ENCODE measurements at regions of chr20 and their contacts with region 1.

Region 1: GRCh38 chr20:41738604-41739206 is 120.5 kb upstream of the CHD6 start:
- DNase-seq: peak in 1 of 2 experiments; percentile 59
- H3K4me3 ChIP-seq: no peak overlapping the region
- H3K27ac ChIP-seq: no peak overlapping the region
- H3K4me1 ChIP-seq: no peaks in the 10 kb centered on the region
- H3K27me3 ChIP-seq: peaks cover 38% of the 10 kb centered on the region
- CTCF ChIP-seq: peak; percentile 89

Region 2: GRCh38 chr20:41748756-41749582 is 10.3 kb after region 1 on chr20:
- CTCF ChIA-PET with region 1: no interaction called
- POLR2A ChIA-PET with region 1: no interaction called
- intact Hi-C with region 1: no loop called
- DNase-seq: no peak
- H3K4me3 ChIP-seq: no peak overlapping the region
- H3K27ac ChIP-seq: no peak overlapping the region
- H3K4me1 ChIP-seq: no peaks in the 10 kb centered on the region
- H3K27me3 ChIP-seq: peaks cover 37% of the 10 kb centered on the region
- CTCF ChIP-seq: no peak

Region 3: GRCh38 chr20:41984031-41984430 is 245.3 kb after region 1 on chr20:
- CTCF ChIA-PET with region 1: no interaction called
- POLR2A ChIA-PET with region 1: no interaction called
- intact Hi-C with region 1: no loop called
- DNase-seq: no peak
- H3K4me3 ChIP-seq: no peak overlapping the region
- H3K27ac ChIP-seq: no peak overlapping the region
- H3K4me1 ChIP-seq: no peaks in the 10 kb centered on the region
- H3K27me3 ChIP-seq: 0 out of 2 replicates have a peak, but pooled peaks cover under 1% of the 10 kb centered on the region
- CTCF ChIP-seq: no peak

Region 4: DNA sequence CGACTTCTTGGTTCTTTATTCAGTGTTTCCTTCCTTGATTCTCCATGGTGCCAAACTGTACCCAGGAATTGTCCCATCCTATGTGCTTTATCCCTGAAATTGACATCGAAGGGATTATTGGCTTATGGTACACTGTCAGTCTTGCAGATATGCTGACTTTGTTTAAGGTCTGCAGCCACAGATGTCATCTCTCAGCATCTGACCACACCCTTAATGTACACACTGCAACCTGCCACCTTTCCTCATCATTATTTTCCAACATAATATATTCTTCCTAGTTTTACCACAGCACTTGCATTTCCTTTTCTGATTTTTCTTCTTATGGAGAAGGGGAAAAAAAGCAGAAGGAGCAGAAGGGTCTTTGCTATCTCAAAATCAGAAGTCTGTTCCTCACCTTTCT is 788.6 kb after region 1 on chr20:
- CTCF ChIA-PET with region 1: no interaction called
- POLR2A ChIA-PET with region 1: no interaction called
- intact Hi-C with region 1: loop called (anchors 10 kb)
- DNase-seq: no peak
- H3K4me3 ChIP-seq: no peak overlapping the region
- H3K27ac ChIP-seq: no peak overlapping the region
- H3K4me1 ChIP-seq: no peaks in the 10 kb centered on the region
- H3K27me3 ChIP-seq: peaks cover 33% of the 10 kb centered on the region
- CTCF ChIP-seq: no peak

Region 5: DNA sequence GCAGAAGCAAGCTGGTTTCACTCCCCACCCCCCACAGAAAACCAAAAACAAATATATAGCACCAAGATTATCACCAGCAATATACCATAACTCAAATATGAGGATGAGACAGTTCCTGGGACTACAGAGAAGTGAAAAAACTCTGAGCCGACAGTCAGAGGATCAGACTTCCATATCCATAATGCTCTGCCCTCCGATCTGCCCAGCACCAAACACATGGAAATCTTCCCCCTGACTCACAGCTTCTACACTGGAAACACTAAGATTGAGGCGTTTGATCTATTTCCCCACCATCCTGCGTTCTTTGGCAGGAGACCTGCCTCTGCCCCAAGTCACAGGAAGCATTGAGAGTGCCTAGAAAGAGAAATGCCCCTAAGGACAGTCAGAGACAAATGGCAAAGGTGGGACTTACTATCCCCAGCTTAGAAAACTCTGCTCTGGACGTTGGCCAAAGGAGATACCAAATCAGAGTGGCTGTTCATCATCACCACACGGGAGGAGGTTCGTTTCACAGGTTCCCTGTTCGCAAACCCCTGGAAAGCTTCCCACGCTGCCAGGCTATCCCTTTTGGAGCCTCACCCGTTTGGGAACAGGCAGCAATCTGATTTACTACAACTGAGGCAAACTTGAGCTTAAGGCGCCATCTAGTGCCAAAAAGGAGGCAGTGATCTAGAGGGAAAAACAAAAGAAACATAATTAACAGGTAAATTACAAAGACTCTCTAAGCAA is 1670.3 kb after region 1 on chr20:
- CTCF ChIA-PET with region 1: interaction called, 5 read pairs
- POLR2A ChIA-PET with region 1: no interaction called
- intact Hi-C with region 1: loop called (anchors 2 kb)
- DNase-seq: peak in 1 of 2 experiments; percentile 21
- H3K4me3 ChIP-seq: no peak overlapping the region
- H3K27ac ChIP-seq: no peak overlapping the region
- H3K4me1 ChIP-seq: no peaks in the 10 kb centered on the region
- H3K27me3 ChIP-seq: peaks cover 39% of the 10 kb centered on the region
- CTCF ChIP-seq: peak; percentile 90

Measured in PC-9 (cell line).